ENCODE measurements at regions of chr12 and their contacts with region 1.

Region 1: GRCh38 chr12:47021298-47021697 is 58.1 kb upstream of the PCED1B start:
- DNase-seq: peak; percentile 84
- ATAC-seq: peak; percentile 75
- H3K4me3 ChIP-seq: no peak overlapping the region
- H3K27ac ChIP-seq: no peak overlapping the region
- H3K4me1 ChIP-seq: no peaks in the 10 kb centered on the region
- H3K27me3 ChIP-seq: no peaks in the 10 kb centered on the region
- CTCF ChIP-seq: peak; percentile 68; the same call in 1 of the 2 replicates

Region 2: DNA sequence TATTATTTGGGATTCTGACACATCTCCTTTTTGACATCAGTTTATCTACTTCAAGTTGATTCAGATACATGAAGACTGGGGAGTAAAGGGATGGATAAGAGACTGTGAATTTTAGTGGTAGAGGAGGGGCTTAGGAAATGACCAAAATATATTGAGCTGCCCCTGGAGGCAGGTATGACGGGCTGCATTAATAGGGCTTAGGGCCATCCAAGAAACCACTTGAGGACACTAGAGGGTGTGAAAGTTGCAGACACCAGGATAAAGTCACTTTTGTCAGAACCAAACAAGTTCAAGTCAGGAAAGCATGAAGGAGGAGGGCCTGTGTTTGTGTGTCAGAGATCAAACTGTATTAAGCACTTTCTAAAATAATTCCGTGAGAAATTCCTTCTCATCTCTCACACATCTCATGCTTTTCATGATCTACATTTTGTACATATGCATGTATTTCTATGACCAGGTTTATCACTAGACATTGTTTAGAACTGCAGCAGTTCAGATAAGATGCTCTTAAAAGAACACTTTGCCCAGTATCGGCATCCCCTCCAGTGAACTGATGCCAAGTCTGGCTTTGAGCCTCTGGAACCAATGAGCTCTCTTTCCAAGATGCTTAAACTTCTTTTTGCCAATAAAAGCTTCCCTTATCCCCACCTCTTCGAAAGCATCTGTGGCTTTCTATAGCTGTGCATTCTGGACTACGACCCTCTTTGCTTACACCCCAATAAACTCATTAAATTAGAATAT is 889.4 kb before region 1 on chr12:
- CTCF ChIA-PET with region 1: no interaction called
- POLR2A ChIA-PET with region 1: no interaction called
- in situ Hi-C with region 1: no loop called
- intact Hi-C with region 1: loop called (anchors 10 kb)
- DNase-seq: no peak
- ATAC-seq: peak; percentile 85
- H3K4me3 ChIP-seq: no peak overlapping the region
- H3K27ac ChIP-seq: no peak overlapping the region
- H3K4me1 ChIP-seq: no peaks in the 10 kb centered on the region
- H3K27me3 ChIP-seq: peaks cover 4% of the 10 kb centered on the region; the same call in 1 of the 2 replicates
- CTCF ChIP-seq: peak; percentile 52

Measured in Panc1 (cell line).